Activated CD8-positive, alpha-beta memory T cell treated with anti-CD3 and anti-CD28 coated beads, Interleukin-2, amount 10 ng/mL, durations not matched to agents 7 days and 5 days (primary cell): ENCODE measurements at regions of chr21 and their contacts with region 1.

Region 1: DNA sequence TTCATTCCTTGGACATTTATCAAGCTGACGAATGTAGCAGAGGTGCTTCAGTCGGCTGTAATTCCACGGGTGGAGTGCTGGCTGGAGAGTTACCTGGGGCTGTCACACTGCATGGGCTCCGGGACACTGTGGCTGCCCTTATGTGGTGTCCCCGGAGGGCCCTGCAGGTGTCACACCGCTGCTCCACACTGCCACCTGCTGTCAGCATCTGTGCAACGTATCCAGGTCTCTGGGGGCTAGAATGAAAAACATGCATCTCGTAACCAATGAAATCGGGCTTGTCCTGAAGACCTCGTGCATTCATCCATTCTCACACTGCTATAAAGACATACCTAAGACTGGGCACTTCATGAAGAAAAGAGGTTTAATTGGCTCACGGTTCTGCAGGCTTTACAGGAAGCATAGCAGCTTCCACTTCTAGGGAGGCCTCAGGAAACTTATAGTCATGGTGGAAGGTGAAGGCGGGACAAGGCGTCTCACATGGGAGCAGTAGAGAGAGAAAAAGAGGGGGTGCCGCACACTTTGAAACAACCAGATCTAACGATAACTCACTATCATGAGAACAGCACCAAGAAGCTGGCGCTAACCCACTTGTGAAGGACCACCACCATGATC is 46.7 kb upstream of the PCBP3 start:
- DNase-seq: peak; percentile 89
- ATAC-seq: peak; percentile 69
- H3K4me3 Mint-ChIP-seq: no peak overlapping the region
- H3K27ac Mint-ChIP-seq: no peak overlapping the region
- H3K4me1 Mint-ChIP-seq: peaks cover 11% of the 10 kb centered on the region
- H3K27me3 Mint-ChIP-seq: no peaks in the 10 kb centered on the region

Region 2: GRCh38 chr21:45405271-45405817 is 191.5 kb before region 1 on chr21:
- CTCF ChIA-PET with region 1: no interaction called
- DNase-seq: no peak
- ATAC-seq: no peak
- H3K4me3 Mint-ChIP-seq: no peak overlapping the region
- H3K27ac Mint-ChIP-seq: no peak overlapping the region
- H3K4me1 Mint-ChIP-seq: peaks cover 8% of the 10 kb centered on the region
- H3K27me3 Mint-ChIP-seq: peaks cover 60% of the 10 kb centered on the region

Region 3: GRCh38 chr21:45478115-45478801 is 118.6 kb before region 1 on chr21:
- CTCF ChIA-PET with region 1: interaction called, 14 read pairs
- DNase-seq: peak; percentile 87
- ATAC-seq: peak; percentile 72
- H3K4me3 Mint-ChIP-seq: peak overlapping the region; percentile 75
- H3K27ac Mint-ChIP-seq: peak overlapping the region; percentile 94
- H3K4me1 Mint-ChIP-seq: peaks cover 34% of the 10 kb centered on the region
- H3K27me3 Mint-ChIP-seq: no peaks in the 10 kb centered on the region

Region 4: DNA sequence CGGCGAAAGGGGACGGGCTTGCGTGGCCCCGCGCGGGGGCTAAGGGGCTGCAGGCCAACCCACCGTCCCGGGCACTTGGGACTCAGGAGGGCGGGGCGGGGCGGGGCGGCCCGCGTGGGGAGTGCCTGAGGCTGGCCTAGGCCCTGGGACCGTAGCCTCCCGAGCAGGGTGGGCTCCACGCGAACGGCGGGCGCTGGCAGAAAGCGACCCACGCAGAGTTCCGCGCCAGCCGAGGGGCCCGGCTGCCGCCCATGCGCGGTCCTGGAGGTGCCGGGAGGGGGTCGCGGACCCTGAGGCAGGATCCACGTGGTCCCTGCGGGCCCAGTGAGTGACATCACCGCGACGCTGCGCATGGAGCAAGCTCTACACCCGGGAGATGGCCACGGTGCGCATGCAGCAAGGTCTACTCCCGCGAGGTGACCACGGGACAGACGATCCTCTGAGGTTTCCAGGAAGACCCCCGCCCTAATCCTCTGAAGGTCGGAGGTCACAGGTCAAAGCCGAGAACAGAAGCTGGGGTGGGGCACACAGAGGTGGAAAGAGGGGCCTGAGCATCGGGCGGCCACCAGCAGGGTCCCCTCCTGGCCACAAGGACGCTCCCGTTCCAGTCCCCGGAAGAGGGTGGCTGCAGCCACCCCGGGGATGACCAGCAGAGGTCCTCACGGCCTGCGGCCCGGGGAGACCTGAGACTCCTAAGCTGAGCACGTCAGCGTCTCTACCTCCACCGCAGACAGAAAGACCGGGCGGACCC is 41.1 kb before region 1 on chr21:
- CTCF ChIA-PET with region 1: interaction called, 41 read pairs
- DNase-seq: peak; percentile 69
- ATAC-seq: peak; percentile 27
- H3K4me3 Mint-ChIP-seq: peak overlapping the region; percentile 38
- H3K27ac Mint-ChIP-seq: no peak overlapping the region
- H3K4me1 Mint-ChIP-seq: peaks cover 28% of the 10 kb centered on the region
- H3K27me3 Mint-ChIP-seq: peaks cover 2% of the 10 kb centered on the region

Region 5: GRCh38 chr21:45632160-45632559 is 35.3 kb after region 1 on chr21:
- CTCF ChIA-PET with region 1: no interaction called
- DNase-seq: no peak
- ATAC-seq: no peak
- H3K4me3 Mint-ChIP-seq: no peak overlapping the region
- H3K27ac Mint-ChIP-seq: no peak overlapping the region
- H3K4me1 Mint-ChIP-seq: peaks cover 5% of the 10 kb centered on the region
- H3K27me3 Mint-ChIP-seq: peaks cover 12% of the 10 kb centered on the region

Region 6: GRCh38 chr21:45820171-45821091 is 223.6 kb after region 1 on chr21:
- CTCF ChIA-PET with region 1: interaction called, 10 read pairs
- DNase-seq: peak; percentile 85
- ATAC-seq: peak; percentile 60
- H3K4me3 Mint-ChIP-seq: no peak overlapping the region
- H3K27ac Mint-ChIP-seq: no peak overlapping the region
- H3K4me1 Mint-ChIP-seq: peaks cover 36% of the 10 kb centered on the region
- H3K27me3 Mint-ChIP-seq: peaks cover 28% of the 10 kb centered on the region